MCF 10A (cell line): ENCODE measurements at regions of chr6 and their contacts with region 1.

Region 1: GRCh38 chr6:27838058-27838944 is 73.9 kb downstream of the OR2B2 start:
- DNase-seq: peak; percentile 98
- H3K4me3 Mint-ChIP-seq: no peak overlapping the region
- H3K27ac Mint-ChIP-seq: no peak overlapping the region
- H3K4me1 Mint-ChIP-seq: peaks cover 32% of the 10 kb centered on the region
- H3K27me3 Mint-ChIP-seq: no peaks in the 10 kb centered on the region
- CTCF ChIP-seq: no peak

Region 2: GRCh38 chr6:26054857-26055669 is 1783.2 kb before region 1 on chr6:
- CTCF ChIA-PET with region 1: no interaction called
- POLR2A ChIA-PET with region 1: interaction called, 23 read pairs
- intact Hi-C with region 1: no loop called
- DNase-seq: peak; percentile 96
- H3K4me3 Mint-ChIP-seq: peak overlapping the region; percentile 74
- H3K27ac Mint-ChIP-seq: peak overlapping the region; percentile 92
- H3K4me1 Mint-ChIP-seq: no peaks in the 10 kb centered on the region
- H3K27me3 Mint-ChIP-seq: no peaks in the 10 kb centered on the region
- CTCF ChIP-seq: no peak

Region 3: GRCh38 chr6:26234421-26235296 is 1603.6 kb before region 1 on chr6:
- CTCF ChIA-PET with region 1: no interaction called
- POLR2A ChIA-PET with region 1: interaction called, 16 read pairs
- intact Hi-C with region 1: no loop called
- DNase-seq: peak; percentile 90
- H3K4me3 Mint-ChIP-seq: peak overlapping the region; percentile 82
- H3K27ac Mint-ChIP-seq: peak overlapping the region; percentile 85
- H3K4me1 Mint-ChIP-seq: peaks cover 32% of the 10 kb centered on the region
- H3K27me3 Mint-ChIP-seq: no peaks in the 10 kb centered on the region
- CTCF ChIP-seq: no peak

Region 4: DNA sequence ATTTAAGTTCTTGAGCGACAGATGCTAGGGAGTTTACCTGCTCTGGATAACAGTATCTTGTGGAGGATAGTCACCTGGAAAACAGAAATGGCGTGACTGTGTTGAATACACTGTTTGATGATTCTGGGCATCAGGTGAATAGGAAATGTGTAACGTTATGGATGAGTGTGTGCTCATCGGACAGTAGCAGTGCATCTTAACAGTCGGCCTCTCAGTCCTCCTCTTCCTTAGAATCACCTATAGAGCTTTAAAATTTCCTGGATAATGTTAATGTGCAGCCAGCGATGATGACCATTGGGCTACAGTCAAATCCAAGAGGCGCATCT is 143.8 kb before region 1 on chr6:
- CTCF ChIA-PET with region 1: no interaction called
- POLR2A ChIA-PET with region 1: no interaction called
- intact Hi-C with region 1: no loop called
- DNase-seq: no peak
- H3K4me3 Mint-ChIP-seq: peak overlapping the region; percentile 76
- H3K27ac Mint-ChIP-seq: peak overlapping the region; percentile 69
- H3K4me1 Mint-ChIP-seq: peaks cover 13% of the 10 kb centered on the region
- H3K27me3 Mint-ChIP-seq: no peaks in the 10 kb centered on the region
- CTCF ChIP-seq: no peak

Region 5: GRCh38 chr6:27825025-27825793 is 13.1 kb before region 1 on chr6:
- CTCF ChIA-PET with region 1: interaction called, 6 read pairs
- POLR2A ChIA-PET with region 1: interaction called, 318 read pairs
- intact Hi-C with region 1: no loop called
- DNase-seq: no peak
- H3K4me3 Mint-ChIP-seq: peak overlapping the region; percentile 94
- H3K27ac Mint-ChIP-seq: peak overlapping the region; percentile 95
- H3K4me1 Mint-ChIP-seq: peaks cover 10% of the 10 kb centered on the region
- H3K27me3 Mint-ChIP-seq: no peaks in the 10 kb centered on the region
- CTCF ChIP-seq: no peak

Region 6: DNA sequence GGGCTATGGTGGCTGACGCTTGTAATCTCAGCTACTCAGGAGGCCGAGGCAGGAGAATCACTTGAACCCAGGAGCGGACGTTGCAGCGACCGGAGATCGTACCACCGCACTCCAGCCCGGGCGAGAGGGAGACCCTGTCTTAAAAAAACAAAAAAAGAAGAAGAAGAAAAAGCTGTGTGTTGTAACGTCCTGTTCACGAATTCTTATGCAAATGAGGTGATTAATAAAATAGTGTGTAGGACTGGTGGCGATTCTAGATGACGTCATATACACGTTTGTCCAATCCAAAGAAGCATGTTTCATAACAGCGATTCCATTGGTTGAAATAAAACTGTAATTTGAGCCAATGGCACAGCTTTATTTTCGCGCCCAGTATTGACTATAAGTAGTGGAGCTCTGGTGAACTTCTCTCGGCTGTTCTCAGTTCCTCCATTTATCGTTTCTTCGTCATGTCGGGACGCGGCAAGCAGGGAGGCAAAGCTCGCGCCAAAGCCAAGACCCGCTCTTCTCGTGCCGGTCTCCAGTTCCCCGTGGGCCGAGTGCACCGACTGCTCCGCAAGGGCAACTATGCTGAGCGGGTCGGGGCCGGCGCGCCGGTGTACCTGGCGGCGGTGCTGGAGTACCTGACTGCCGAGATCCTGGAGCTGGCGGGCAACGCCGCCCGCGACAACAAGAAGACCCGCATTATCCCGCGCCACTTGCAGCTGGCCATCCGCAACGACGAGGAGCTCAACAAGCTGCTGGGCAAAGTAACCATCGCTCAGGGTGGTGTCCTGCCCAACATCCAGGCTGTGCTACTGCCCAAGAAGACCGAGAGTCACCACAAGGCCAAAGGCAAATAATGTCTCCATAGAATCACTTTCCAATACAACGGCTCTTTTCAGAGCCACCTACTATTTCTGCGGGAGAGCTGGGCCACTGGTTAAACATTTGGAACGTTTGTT is 26.9 kb after region 1 on chr6:
- CTCF ChIA-PET with region 1: interaction called, 29 read pairs
- POLR2A ChIA-PET with region 1: interaction called, 826 read pairs
- intact Hi-C with region 1: loop called (anchors 1 kb)
- DNase-seq: peak; percentile 96
- H3K4me3 Mint-ChIP-seq: peak overlapping the region; percentile 91
- H3K27ac Mint-ChIP-seq: peak overlapping the region; percentile 97
- H3K4me1 Mint-ChIP-seq: no peaks in the 10 kb centered on the region
- H3K27me3 Mint-ChIP-seq: no peaks in the 10 kb centered on the region
- CTCF ChIP-seq: no peak